Caco-2 (cell line): ENCODE measurements at regions of chr3 and their contacts with region 1.

Region 1: GRCh38 chr3:120417272-120417911 is 33.4 kb downstream of the FSTL1 start:
- DNase-seq: peak; percentile 94 to 96
- H3K4me3 ChIP-seq: peak overlapping the region; percentile 30
- H3K4me3 Mint-ChIP-seq: peak overlapping the region; percentile 78
- H3K27ac Mint-ChIP-seq: peak overlapping the region; percentile 90
- H3K4me1 ChIP-seq: peaks cover 14% of the 10 kb centered on the region
- H3K4me1 Mint-ChIP-seq: no peaks in the 10 kb centered on the region
- H3K27me3 ChIP-seq: no peaks in the 10 kb centered on the region
- H3K27me3 Mint-ChIP-seq: no peaks in the 10 kb centered on the region
- CTCF ChIP-seq: peak; percentile 69 to 86

Region 2: DNA sequence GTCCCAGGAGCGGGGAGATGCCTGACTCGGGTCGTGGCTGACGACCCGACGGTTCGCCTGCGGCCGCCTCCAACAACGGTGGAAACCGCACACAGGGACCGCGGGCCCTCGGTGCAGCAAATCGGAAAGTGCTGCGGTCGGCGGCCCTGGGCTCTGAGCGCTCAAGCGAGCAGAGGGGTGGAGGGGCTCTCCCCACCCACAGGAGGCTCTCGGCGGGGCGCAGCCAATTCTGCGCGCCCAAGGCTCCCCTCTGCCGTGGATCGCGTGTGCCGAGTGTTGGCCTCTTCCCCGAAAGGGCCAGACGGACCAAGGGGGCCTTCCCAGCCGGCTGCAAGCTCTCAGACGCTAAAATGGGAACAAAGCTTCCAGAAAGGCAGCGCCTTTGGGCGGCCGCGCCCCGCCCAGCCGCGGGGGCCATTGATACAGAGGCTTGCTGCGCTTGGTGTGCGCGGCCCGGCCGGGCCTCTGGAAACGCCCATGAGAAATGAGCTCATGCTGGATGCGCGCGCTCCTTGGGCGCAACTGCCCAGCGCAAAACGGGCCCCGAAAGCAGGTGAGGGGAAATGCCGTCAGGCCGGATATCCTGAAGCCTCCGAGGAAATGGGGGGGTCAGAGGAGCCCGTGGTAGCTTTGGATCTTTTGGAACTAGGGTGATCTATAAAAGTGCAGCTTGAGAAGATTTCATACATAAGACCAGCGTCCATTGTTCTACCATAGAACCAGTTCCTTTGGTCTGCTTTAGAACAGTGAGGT is 322.0 kb before region 1 on chr3:
- CTCF ChIA-PET with region 1: no interaction called
- POLR2A ChIA-PET with region 1: interaction called, 6 read pairs
- intact Hi-C with region 1: loop called (anchors 1 kb)
- DNase-seq: peak; percentile 91 to 92
- H3K4me3 ChIP-seq: peak overlapping the region; percentile 91
- H3K4me3 Mint-ChIP-seq: no peak overlapping the region
- H3K27ac Mint-ChIP-seq: no peak overlapping the region
- H3K4me1 ChIP-seq: peaks cover 25% of the 10 kb centered on the region
- H3K4me1 Mint-ChIP-seq: peaks cover 17% of the 10 kb centered on the region
- H3K27me3 ChIP-seq: no peaks in the 10 kb centered on the region
- H3K27me3 Mint-ChIP-seq: no peaks in the 10 kb centered on the region
- CTCF ChIP-seq: no peak

Region 3: GRCh38 chr3:120348981-120349818 is 68.2 kb before region 1 on chr3 and contains the start of gene LRRC58:
- CTCF ChIA-PET with region 1: interaction called, 30 read pairs
- POLR2A ChIA-PET with region 1: interaction called, 4 read pairs
- intact Hi-C with region 1: loop called (anchors 1 kb)
- DNase-seq: peak; percentile 87 to 91
- H3K4me3 ChIP-seq: peak within 1 kb of the TSS; percentile 94
- H3K4me3 Mint-ChIP-seq: peak within 1 kb of the TSS; percentile 82
- H3K27ac Mint-ChIP-seq: peak within 1 kb of the TSS; percentile 87
- H3K4me1 ChIP-seq: peaks cover 8% of the 10 kb centered on the region
- H3K4me1 Mint-ChIP-seq: peaks cover 21% of the 10 kb centered on the region
- H3K27me3 ChIP-seq: no peaks in the 10 kb centered on the region; the same call in 1 of the 2 replicates
- H3K27me3 Mint-ChIP-seq: no peaks in the 10 kb centered on the region
- CTCF ChIP-seq: peak in 1 of 2 experiments; percentile 8
- total RNA-seq, gene LRRC58: 19.8 and 20.5 TPM in 2 replicates

Region 4: DNA sequence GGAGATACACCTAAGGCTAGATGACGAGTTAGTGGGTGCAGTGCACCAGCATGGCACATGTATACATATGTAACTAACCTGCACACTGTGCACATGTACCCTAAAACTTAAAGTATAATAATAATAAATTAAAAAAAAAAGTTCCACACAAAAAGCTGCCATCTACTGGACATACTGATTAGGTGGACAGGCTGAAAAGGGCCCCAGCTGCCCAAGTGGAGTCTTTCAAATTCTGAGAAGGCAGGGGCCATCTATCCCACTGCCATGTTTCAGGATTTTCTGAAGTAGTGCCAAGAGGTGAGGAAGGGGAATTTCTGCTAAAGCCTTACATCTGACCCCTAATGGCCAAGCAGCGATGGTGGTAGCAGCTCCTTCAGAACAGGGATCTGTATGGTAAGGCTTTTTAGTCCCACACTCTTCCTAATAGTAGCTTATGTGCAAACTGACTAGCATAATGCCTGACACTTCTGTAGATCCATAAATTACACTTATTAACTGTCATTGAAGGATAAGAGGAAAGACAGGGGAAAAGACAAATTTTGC is 25.7 kb after region 1 on chr3:
- CTCF ChIA-PET with region 1: interaction called, 13 read pairs
- POLR2A ChIA-PET with region 1: no interaction called
- intact Hi-C with region 1: no loop called
- DNase-seq: no peak
- H3K4me3 ChIP-seq: no peak overlapping the region
- H3K4me3 Mint-ChIP-seq: no peak overlapping the region
- H3K27ac Mint-ChIP-seq: no peak overlapping the region
- H3K4me1 ChIP-seq: 0 out of 2 replicates have a peak, but pooled peaks cover 10% of the 10 kb centered on the region
- H3K4me1 Mint-ChIP-seq: no peaks in the 10 kb centered on the region
- H3K27me3 ChIP-seq: no peaks in the 10 kb centered on the region
- H3K27me3 Mint-ChIP-seq: no peaks in the 10 kb centered on the region
- CTCF ChIP-seq: peak; percentile 6 to 19

Region 5: GRCh38 chr3:120506828-120507774 is 89.7 kb after region 1 on chr3:
- CTCF ChIA-PET with region 1: interaction called, 15 read pairs
- POLR2A ChIA-PET with region 1: interaction called, 3 read pairs
- intact Hi-C with region 1: loop called (anchors 1 kb)
- DNase-seq: peak; percentile 35 to 44
- H3K4me3 ChIP-seq: no peak overlapping the region
- H3K4me3 Mint-ChIP-seq: no peak overlapping the region
- H3K27ac Mint-ChIP-seq: no peak overlapping the region
- H3K4me1 ChIP-seq: no peaks in the 10 kb centered on the region
- H3K4me1 Mint-ChIP-seq: no peaks in the 10 kb centered on the region
- H3K27me3 ChIP-seq: no peaks in the 10 kb centered on the region; the same call in 1 of the 2 replicates
- H3K27me3 Mint-ChIP-seq: no peaks in the 10 kb centered on the region
- CTCF ChIP-seq: peak; percentile 46 to 51

Region 6: DNA sequence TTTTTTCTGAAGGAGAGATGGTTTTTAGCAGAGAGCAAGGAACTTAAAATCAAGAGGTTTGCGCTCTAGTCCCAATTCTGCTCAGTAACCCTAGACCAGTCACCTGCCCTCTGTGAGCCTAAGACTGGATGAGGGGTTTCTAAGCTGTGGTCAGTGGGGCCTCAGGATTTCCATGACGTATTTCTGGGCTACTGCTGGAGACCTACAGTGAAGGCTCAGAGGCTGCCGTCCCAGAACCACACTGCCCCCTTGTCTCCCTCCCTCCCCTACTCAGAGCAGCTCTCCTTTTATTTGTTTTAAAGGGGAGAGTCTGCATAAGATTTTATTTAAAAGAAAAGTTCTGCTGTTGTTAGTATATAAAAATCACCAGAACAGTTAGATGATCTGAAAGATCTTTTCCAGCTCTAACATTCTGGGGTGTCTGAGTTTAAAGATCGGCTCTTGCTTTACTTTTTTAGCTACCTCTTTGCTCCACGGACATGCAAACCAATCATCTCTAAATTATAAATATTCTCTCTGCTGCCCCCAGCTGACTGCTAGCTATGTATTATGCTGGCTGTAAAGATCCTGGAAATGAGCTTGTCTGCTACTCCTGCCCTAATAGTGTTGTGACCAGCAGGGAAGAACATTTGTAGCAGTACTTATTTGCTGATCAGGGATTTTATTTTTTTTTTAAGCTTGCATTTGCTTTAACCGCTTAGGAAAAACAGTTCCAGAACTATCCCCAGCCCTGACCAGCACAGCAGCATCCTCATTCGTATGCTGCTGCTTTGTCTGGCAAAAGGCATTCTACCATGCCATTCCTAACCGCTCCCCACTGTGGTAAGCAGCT is 150.2 kb after region 1 on chr3:
- CTCF ChIA-PET with region 1: interaction called, 23 read pairs
- POLR2A ChIA-PET with region 1: no interaction called
- intact Hi-C with region 1: no loop called
- DNase-seq: peak in 1 of 2 experiments; percentile 29
- H3K4me3 ChIP-seq: no peak overlapping the region
- H3K4me3 Mint-ChIP-seq: peak overlapping the region; percentile 63
- H3K27ac Mint-ChIP-seq: peak overlapping the region; percentile 11
- H3K4me1 ChIP-seq: no peaks in the 10 kb centered on the region
- H3K4me1 Mint-ChIP-seq: no peaks in the 10 kb centered on the region
- H3K27me3 ChIP-seq: no peaks in the 10 kb centered on the region
- H3K27me3 Mint-ChIP-seq: no peaks in the 10 kb centered on the region
- CTCF ChIP-seq: peak; percentile 27 to 36